GM12878 (cell line): ENCODE measurements at regions of chr19 and their contacts with region 1.

Region 1: GRCh38 chr19:47256688-47257443 is 541 bp downstream of the CCDC9 start:
- DNase-seq: peak; percentile 92
- ATAC-seq: peak; percentile 91
- H3K4me3 ChIP-seq: peak overlapping the region; percentile 93; the same call in 1 of the 2 replicates
- H3K27ac ChIP-seq: peak overlapping the region; percentile 86
- H3K4me1 ChIP-seq: peaks cover 8% of the 10 kb centered on the region
- H3K27me3 ChIP-seq: no peaks in the 10 kb centered on the region
- CTCF ChIP-seq: no peak
- EP300 ChIP-seq: no peak
- POLR2A ChIP-seq: peak; percentile 10; the same call in 1 of the 2 replicates
- RAD21 ChIP-seq: no peak

Region 2: GRCh38 chr19:45985321-45985720 is 1271.5 kb before region 1 on chr19:
- CTCF ChIA-PET with region 1: no interaction called
- POLR2A ChIA-PET with region 1: interaction called, 10 read pairs
- RAD21 ChIA-PET with region 1: no interaction called
- SMC1A ChIA-PET with region 1: no interaction called
- in situ Hi-C with region 1: no loop called
- intact Hi-C with region 1: no loop called
- DNase-seq: no peak
- ATAC-seq: no peak
- H3K4me3 ChIP-seq: no peak overlapping the region
- H3K27ac ChIP-seq: no peak overlapping the region
- H3K4me1 ChIP-seq: no peaks in the 10 kb centered on the region
- H3K27me3 ChIP-seq: no peaks in the 10 kb centered on the region; a peak in 2 of 4 replicates
- CTCF ChIP-seq: no peak
- EP300 ChIP-seq: no peak
- POLR2A ChIP-seq: no peak
- RAD21 ChIP-seq: no peak

Region 3: DNA sequence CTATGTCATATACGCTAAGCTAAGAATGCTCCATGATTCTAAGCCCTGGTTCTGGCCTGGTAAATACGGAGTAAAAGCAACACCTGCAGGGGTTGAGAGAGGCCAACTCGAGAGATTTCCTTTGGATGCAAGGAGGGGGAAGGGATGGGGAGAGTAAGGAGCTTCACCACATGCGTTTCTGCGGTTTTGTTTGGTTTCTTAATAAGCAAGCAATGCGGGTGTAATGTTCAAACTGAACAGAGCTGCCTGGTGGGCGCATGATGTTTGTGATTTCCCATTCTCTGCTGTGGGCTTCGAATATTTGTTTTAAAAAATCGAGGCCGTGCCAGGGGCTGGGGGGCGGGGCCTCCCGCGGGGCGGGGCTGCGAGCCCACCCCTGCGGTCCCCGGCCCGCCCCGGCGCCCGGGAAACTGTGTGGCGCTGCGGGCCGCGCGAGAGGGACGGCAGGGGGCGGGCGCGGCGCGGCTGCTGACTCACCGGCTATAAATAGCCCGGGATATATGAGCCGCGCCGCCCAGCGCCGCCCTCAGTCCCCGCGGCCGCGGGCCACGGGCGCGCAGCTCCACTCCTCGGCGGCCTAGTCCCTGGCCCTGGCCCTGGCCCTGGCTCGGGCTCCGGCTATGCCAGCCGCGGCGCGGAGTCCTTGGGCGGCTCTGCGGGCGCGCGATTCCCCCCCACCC is 31.0 kb before region 1 on chr19:
- CTCF ChIA-PET with region 1: interaction called, 3 read pairs
- POLR2A ChIA-PET with region 1: interaction called, 24 read pairs
- RAD21 ChIA-PET with region 1: interaction called, 6 read pairs
- SMC1A ChIA-PET with region 1: no interaction called
- in situ Hi-C with region 1: no loop called
- intact Hi-C with region 1: no loop called
- DNase-seq: no peak
- ATAC-seq: peak; percentile 73
- H3K4me3 ChIP-seq: peak overlapping the region; percentile 91; the same call in 1 of the 2 replicates
- H3K27ac ChIP-seq: peak overlapping the region; percentile 78
- H3K4me1 ChIP-seq: peaks cover 34% of the 10 kb centered on the region
- H3K27me3 ChIP-seq: no peaks in the 10 kb centered on the region
- CTCF ChIP-seq: peak; percentile 1 to 46 (median 5); a peak in 2 of 6 replicates
- EP300 ChIP-seq: peak; percentile 9 to 34; a peak in 1 of 4 replicates
- POLR2A ChIP-seq: no peak; the same call in 1 of the 2 replicates
- RAD21 ChIP-seq: no peak

Region 4: GRCh38 chr19:47273313-47273977 is 16.6 kb after region 1 on chr19:
- CTCF ChIA-PET with region 1: interaction called, 7 read pairs
- POLR2A ChIA-PET with region 1: interaction called, 39 read pairs
- RAD21 ChIA-PET with region 1: interaction called, 39 read pairs
- SMC1A ChIA-PET with region 1: interaction called, 9 read pairs
- in situ Hi-C with region 1: no loop called
- intact Hi-C with region 1: loop called (anchors 1 kb)
- DNase-seq: no peak
- ATAC-seq: peak; percentile 89
- H3K4me3 ChIP-seq: peak overlapping the region; percentile 86
- H3K27ac ChIP-seq: peak overlapping the region; percentile 99
- H3K4me1 ChIP-seq: peaks cover 10% of the 10 kb centered on the region
- H3K27me3 ChIP-seq: no peaks in the 10 kb centered on the region
- CTCF ChIP-seq: no peak
- EP300 ChIP-seq: 0 out of 4 replicates have a peak, but pooled peaks of 1 of the 2 experiments have one; percentile 11
- POLR2A ChIP-seq: peak; percentile 84
- RAD21 ChIP-seq: no peak

Region 5: GRCh38 chr19:47391510-47392223 is 134.8 kb after region 1 on chr19:
- CTCF ChIA-PET with region 1: no interaction called
- POLR2A ChIA-PET with region 1: no interaction called
- RAD21 ChIA-PET with region 1: no interaction called
- SMC1A ChIA-PET with region 1: no interaction called
- in situ Hi-C with region 1: no loop called
- intact Hi-C with region 1: no loop called
- DNase-seq: peak; percentile 12
- ATAC-seq: peak; percentile 98
- H3K4me3 ChIP-seq: no peak overlapping the region
- H3K27ac ChIP-seq: no peak overlapping the region; the same call in 1 of the 2 replicates
- H3K4me1 ChIP-seq: no peaks in the 10 kb centered on the region
- H3K27me3 ChIP-seq: no peaks in the 10 kb centered on the region
- CTCF ChIP-seq: peak; percentile 86 to 92 (median 88)
- EP300 ChIP-seq: no peak
- POLR2A ChIP-seq: no peak
- RAD21 ChIP-seq: peak; percentile 73